ENCODE measurements at regions of chr2 and their contacts with region 1.

Region 1: DNA sequence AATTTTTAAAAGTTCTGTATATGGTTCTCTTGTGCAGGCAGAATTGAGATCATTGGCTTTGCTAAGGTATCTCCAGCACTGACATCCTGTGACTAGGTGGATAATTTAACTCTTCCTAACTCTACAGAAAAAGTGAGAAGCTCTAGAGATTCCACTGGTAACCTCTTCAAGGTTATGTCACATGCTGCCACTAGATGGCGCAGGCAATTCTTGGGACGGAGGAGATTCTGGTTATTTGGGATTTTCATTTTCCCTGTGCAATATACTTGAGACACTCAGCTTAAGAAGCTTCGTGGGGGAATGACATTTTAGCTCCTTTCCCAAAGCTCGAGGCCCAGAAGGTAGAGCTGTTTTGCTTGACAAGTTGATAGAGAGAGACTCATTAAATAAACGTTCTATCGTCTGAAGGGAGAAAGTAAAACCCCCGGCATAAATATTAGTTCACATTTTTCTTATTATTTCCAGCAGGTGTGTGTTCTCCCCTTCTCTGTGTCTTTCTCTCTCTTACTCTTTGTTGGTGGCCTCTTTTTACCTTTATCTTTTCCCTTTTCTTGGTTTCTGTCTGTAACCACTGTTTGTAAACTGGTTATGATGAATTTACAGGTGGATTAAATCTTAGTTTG is 26.6 kb upstream of the LANCL1 start:
- DNase-seq: peak in 9 of 10 donors; percentile 46 to 75 (median 70)
- H3K4me3 ChIP-seq: peak overlapping the region in 58 of 59 donors; percentile 7 to 67 (median 42)
- H3K27ac ChIP-seq: peak overlapping the region; percentile 73 to 100 (median 97)
- H3K27me3 ChIP-seq: peaks cover 0 to 2% (median 0%) of the 10 kb centered on the region in 45 donors
- CTCF ChIP-seq: peak; percentile 81 to 99 (median 92)

Region 2: DNA sequence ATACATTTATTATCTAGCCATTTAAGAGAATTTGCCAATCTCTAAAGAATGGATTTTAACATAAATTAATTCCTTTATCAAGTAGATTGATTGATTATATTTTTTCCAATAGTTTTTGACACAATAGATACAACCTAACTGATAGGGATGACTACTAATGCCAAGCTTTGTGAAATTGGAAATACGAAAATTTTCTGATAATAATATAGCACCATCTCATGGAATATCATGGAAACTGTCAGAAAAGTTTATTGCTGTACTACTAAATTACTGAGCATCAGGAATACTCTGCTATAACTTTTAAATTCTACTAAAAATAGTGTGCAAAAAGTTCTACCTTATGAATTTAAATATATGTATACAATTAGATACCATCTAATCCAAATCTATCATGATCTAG is 1181.1 kb before region 1 on chr2:
- intact Hi-C with region 1: no loop called
- DNase-seq: no peak
- H3K4me3 ChIP-seq: no peak overlapping the region
- H3K27ac ChIP-seq: no peak overlapping the region
- H3K27me3 ChIP-seq: peaks cover 0 to 5% (median 0%) of the 10 kb centered on the region in 45 donors
- CTCF ChIP-seq: peak in 21 of 56 donors; percentile 11 to 52 (median 27)

Region 3: GRCh38 chr2:210445116-210445707 is 57.9 kb before region 1 on chr2:
- intact Hi-C with region 1: loop called in 1 of 2 experiments (anchors 5 kb)
- DNase-seq: no peak
- H3K4me3 ChIP-seq: no peak overlapping the region
- H3K27ac ChIP-seq: peak overlapping the region in 52 of 59 donors; percentile 2 to 84 (median 68)
- H3K27me3 ChIP-seq: no peaks in the 10 kb centered on the region
- CTCF ChIP-seq: peak; percentile 60 to 92 (median 78)

Region 4: DNA sequence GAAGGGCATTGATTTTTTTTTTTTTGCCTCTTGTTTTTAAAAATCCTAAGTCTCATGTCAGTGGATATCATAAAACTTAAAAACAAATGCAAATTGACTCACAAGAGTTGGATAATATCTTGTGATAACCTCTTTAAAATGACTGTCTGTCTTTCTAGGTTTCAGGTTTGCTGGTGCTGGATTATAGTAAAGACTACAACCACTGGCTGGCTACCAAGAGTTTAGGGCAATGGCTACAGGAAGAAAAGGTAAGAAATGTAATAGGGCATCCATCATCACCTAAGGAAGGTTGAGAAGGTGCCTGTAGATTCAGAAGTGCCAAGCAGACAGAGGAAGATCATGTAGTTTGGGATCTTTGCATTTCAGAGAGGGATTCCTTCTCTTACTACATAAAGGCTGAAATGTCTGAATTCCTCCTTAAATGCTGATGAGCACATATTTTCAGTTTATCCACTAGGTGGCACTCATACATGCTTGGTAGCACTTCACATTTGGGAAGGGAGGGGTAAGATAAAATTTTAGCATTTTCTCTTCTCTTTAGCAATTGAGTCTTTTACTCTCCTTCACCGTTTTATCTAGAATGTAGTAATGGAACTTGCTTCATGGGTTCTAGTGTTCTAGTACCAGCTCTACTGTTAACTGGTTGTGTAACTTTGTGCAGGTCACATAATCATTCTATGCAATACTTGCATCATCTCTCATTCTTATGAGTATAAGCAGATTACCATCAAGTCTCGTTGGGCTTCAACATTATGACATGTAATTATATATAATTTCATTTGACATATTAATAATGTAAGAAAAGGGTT is 74.4 kb after region 1 on chr2:
- intact Hi-C with region 1: loop called in 1 of 2 experiments (anchors 5 kb)
- DNase-seq: no peak
- H3K4me3 ChIP-seq: no peak overlapping the region
- H3K27ac ChIP-seq: peak overlapping the region in 40 of 59 donors; percentile 11 to 77 (median 56)
- H3K27me3 ChIP-seq: no peaks in the 10 kb centered on the region
- CTCF ChIP-seq: peak; percentile 58 to 90 (median 82)

Region 5: DNA sequence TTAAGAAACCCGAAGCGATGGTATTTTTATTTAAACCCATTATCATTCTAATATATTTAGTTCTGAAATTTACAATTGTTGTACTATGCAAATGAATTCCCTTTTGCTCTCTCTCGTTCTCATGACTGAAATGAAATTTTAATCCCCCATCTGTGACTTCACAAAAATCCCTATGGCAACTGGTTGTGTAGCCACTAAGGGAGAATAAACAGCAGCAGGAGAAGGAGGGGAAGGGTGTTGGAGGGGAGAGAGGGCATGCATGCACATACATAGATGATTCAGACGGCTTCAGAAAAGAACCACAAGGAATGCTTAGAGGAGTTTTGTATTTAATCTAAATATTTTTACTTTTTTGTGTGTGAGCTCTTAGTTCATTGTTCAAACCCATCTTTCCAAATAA is 90.1 kb after region 1 on chr2:
- intact Hi-C with region 1: loop called in 1 of 2 experiments (anchors 5 kb)
- DNase-seq: no peak
- H3K4me3 ChIP-seq: no peak overlapping the region
- H3K27ac ChIP-seq: no peak overlapping the region
- H3K27me3 ChIP-seq: no peaks in the 10 kb centered on the region
- CTCF ChIP-seq: no peak

Region 6: DNA sequence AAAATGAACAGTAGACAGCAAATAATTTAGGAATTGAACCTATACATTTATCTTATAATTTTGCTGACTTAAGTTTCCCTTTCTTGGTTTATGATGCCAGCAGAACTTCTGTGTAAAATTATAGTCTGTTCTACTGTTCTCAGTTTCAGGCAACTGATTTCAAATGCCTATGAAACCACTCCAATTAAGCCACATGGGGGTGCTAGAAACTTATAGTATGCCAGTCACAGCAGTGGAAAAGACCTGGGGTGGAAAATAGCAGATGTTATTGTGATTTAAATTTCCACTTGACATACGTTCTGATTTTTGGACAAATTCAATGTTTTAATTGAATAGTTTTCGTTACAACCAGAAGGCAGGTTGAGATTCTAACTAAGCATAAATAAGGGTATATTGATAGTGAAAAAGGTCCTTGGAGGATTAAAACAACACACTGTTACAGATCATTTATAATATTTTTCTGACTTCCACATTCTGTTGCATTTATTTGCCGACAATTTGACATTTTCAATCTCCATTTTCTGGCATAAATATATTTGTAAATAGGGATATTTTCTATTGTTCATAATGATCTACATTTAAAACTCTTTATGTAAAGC is 114.7 kb after region 1 on chr2:
- intact Hi-C with region 1: loop called in 1 of 2 experiments (anchors 2 kb)
- DNase-seq: peak in 3 of 10 donors; percentile 12 to 43 (median 31)
- H3K4me3 ChIP-seq: no peak overlapping the region
- H3K27ac ChIP-seq: peak overlapping the region in 24 of 59 donors; percentile 2 to 67 (median 24)
- H3K27me3 ChIP-seq: no peaks in the 10 kb centered on the region
- CTCF ChIP-seq: peak; percentile 50 to 88 (median 76)

Region 7: GRCh38 chr2:210792000-210792399 is 288.9 kb after region 1 on chr2:
- intact Hi-C with region 1: no loop called
- DNase-seq: peak in 1 of 10 donors; percentile 59
- H3K4me3 ChIP-seq: no peak overlapping the region
- H3K27ac ChIP-seq: no peak overlapping the region
- H3K27me3 ChIP-seq: no peaks in the 10 kb centered on the region
- CTCF ChIP-seq: no peak

Region 8: DNA sequence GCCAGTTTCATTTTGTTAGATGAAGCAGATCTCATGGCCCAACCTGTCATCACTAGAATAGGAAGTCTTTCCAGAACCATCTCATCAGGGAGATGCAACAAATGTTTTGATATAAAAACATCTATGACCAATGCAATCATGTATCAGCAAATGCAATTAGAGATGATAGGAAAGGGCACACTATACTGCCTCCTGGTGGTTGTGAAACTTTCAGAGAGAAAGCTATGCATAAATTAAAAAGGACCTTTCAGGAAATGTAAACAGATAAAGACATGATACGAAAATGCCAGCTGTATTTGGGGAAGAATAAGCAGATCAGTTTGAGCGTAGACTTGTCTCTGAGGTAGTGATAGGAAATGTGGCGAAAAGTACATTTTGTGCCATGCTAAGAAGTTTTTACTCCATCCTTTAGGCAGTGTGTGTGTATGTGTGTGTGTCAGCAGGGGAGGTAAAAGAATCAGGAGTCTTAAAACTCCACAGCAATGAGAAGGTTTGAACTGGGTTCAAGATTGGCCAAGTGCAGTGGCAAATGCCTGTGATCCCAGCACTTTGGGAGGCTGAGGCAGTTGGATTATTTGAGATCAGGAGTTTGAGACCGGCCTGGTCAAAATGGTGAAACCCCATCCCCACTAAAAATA is 532.6 kb after region 1 on chr2:
- intact Hi-C with region 1: loop called (anchors 2 to 5 kb)
- DNase-seq: no peak
- H3K4me3 ChIP-seq: no peak overlapping the region
- H3K27ac ChIP-seq: no peak overlapping the region
- H3K27me3 ChIP-seq: peaks cover 0 to 5% (median 0%) of the 10 kb centered on the region in 45 donors
- CTCF ChIP-seq: peak; percentile 33 to 87 (median 63)

Measured in dorsolateral prefrontal cortex (tissue), 120 donors.